CD8-positive, alpha-beta T cell (primary cell): ENCODE measurements at regions of chr10 and their contacts with region 1.

Region 1: GRCh38 chr10:21724695-21725367 is 190.8 kb downstream of the MLLT10 start:
- DNase-seq: peak in 8 of 9 experiments; percentile 22 to 71 (median 53)
- ATAC-seq: peak; percentile 36
- H3K4me3 ChIP-seq: no peak overlapping the region
- H3K4me3 Mint-ChIP-seq: no peak overlapping the region
- H3K27ac ChIP-seq: no peak overlapping the region
- H3K27ac Mint-ChIP-seq: peak overlapping the region; percentile 5
- H3K4me1 ChIP-seq: peaks cover 6% of the 10 kb centered on the region
- H3K4me1 Mint-ChIP-seq: peaks cover 27% of the 10 kb centered on the region
- H3K27me3 ChIP-seq: no peaks in the 10 kb centered on the region
- H3K27me3 Mint-ChIP-seq: no peaks in the 10 kb centered on the region
- CTCF ChIP-seq: no peak

Region 2: GRCh38 chr10:21352886-21353285 is 371.9 kb before region 1 on chr10:
- CTCF ChIA-PET with region 1: no interaction called
- POLR2A ChIA-PET with region 1: no interaction called
- intact Hi-C with region 1: no loop called
- DNase-seq: no peak
- ATAC-seq: no peak
- H3K4me3 ChIP-seq: no peak overlapping the region
- H3K4me3 Mint-ChIP-seq: no peak overlapping the region
- H3K27ac ChIP-seq: no peak overlapping the region
- H3K27ac Mint-ChIP-seq: no peak overlapping the region
- H3K4me1 ChIP-seq: no peaks in the 10 kb centered on the region
- H3K4me1 Mint-ChIP-seq: no peaks in the 10 kb centered on the region
- H3K27me3 ChIP-seq: peaks cover 0 to 3% of the 10 kb centered on the region in 2 experiments
- H3K27me3 Mint-ChIP-seq: peaks cover 3% of the 10 kb centered on the region
- CTCF ChIP-seq: no peak

Region 3: DNA sequence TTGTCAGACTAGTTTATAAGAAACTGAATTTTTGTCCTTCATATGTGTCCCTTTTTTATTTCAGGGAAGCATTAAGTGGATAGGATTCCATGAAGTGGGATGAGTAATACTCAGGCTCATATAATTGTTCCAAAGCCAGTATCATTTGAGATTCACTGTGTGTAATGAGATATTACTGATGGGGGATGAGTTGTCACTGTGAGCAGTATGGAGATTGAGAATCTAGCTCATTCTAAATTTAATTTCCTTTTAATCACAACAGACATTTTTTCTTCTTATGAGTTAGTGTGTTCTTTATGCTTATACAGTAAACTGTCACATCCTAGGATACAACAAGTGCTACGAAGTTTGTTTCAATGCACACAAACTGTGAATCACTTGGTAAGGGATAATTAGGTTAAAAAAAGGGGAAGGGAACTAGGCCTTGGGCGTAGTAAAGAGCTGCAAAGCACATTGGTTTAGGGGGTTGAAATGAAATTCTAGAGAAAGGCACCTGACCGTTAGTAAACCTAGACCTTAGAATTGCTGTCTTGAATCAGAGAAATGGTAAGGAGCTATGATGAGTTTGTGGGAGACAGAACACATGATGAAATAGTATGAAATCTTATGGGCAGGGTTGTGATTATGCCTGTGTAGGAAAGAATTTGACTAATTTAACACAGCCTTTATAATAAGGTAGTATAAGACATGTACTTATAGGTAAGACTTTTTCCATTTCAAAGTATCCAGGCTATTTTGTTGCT is 37.4 kb before region 1 on chr10:
- CTCF ChIA-PET with region 1: no interaction called
- POLR2A ChIA-PET with region 1: no interaction called
- intact Hi-C with region 1: loop called in 1 of 2 experiments (anchors 5 kb)
- DNase-seq: no peak
- ATAC-seq: no peak
- H3K4me3 ChIP-seq: no peak overlapping the region
- H3K4me3 Mint-ChIP-seq: no peak overlapping the region
- H3K27ac ChIP-seq: no peak overlapping the region
- H3K27ac Mint-ChIP-seq: no peak overlapping the region
- H3K4me1 ChIP-seq: no peaks in the 10 kb centered on the region
- H3K4me1 Mint-ChIP-seq: no peaks in the 10 kb centered on the region
- H3K27me3 ChIP-seq: no peaks in the 10 kb centered on the region
- H3K27me3 Mint-ChIP-seq: no peaks in the 10 kb centered on the region
- CTCF ChIP-seq: no peak

Region 4: DNA sequence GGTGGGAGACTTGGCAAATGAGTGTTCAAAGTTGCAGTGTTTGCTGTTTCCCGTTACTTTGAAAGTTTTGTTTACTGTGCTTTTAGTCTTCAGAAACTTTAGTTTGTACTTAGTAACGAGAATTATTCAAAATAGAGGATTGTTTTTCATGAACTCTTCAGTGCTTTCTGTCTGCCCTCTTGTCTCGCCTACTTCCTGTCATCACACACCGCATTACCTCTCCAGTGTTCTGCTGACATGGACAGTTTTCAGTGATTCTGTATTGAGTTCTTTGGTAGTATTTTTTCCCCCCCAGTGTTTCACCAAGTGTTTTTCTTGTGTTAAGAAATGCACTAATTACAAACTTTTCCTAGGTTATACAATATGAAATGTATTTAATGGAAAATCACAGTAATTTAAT is 16.2 kb after region 1 on chr10:
- CTCF ChIA-PET with region 1: interaction called, 4 read pairs
- POLR2A ChIA-PET with region 1: interaction called, 5 read pairs
- intact Hi-C with region 1: loop called in 1 of 2 experiments (anchors 2 kb)
- DNase-seq: peak in 5 of 9 experiments; percentile 20 to 70 (median 58)
- ATAC-seq: peak; percentile 94
- H3K4me3 ChIP-seq: no peak overlapping the region
- H3K4me3 Mint-ChIP-seq: no peak overlapping the region
- H3K27ac ChIP-seq: peak overlapping the region; percentile 22 to 29
- H3K27ac Mint-ChIP-seq: peak overlapping the region; percentile 97
- H3K4me1 ChIP-seq: peaks cover 25% of the 10 kb centered on the region
- H3K4me1 Mint-ChIP-seq: peaks cover 51% of the 10 kb centered on the region
- H3K27me3 ChIP-seq: no peaks in the 10 kb centered on the region
- H3K27me3 Mint-ChIP-seq: no peaks in the 10 kb centered on the region
- CTCF ChIP-seq: no peak

Region 5: GRCh38 chr10:21978191-21978862 is 253.5 kb after region 1 on chr10:
- CTCF ChIA-PET with region 1: no interaction called
- POLR2A ChIA-PET with region 1: no interaction called
- intact Hi-C with region 1: no loop called
- DNase-seq: no peak
- ATAC-seq: no peak
- H3K4me3 ChIP-seq: no peak overlapping the region
- H3K4me3 Mint-ChIP-seq: no peak overlapping the region
- H3K27ac ChIP-seq: no peak overlapping the region
- H3K27ac Mint-ChIP-seq: no peak overlapping the region
- H3K4me1 ChIP-seq: no peaks in the 10 kb centered on the region
- H3K4me1 Mint-ChIP-seq: peaks cover 17% of the 10 kb centered on the region
- H3K27me3 ChIP-seq: no peaks in the 10 kb centered on the region
- H3K27me3 Mint-ChIP-seq: peaks cover 2% of the 10 kb centered on the region
- CTCF ChIP-seq: no peak

Region 6: DNA sequence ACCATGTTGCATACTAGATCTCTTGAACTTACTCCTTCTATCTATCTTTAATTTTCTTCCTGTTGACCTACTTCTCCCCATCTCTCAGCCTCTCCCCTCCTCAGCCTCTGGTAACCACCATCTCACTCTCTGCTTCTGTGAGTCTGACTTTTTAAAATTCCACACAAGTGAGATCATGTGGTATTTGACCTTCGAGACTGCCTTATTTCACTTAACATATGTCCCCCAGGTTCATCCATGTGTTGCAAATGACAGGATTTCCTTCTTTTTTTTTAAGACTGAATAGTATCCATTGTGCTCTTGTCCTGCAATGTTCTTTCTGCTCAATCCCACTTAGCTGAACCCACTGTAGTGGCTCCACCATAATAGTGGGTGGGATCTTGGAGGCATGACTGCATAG is 330.1 kb after region 1 on chr10:
- CTCF ChIA-PET with region 1: no interaction called
- POLR2A ChIA-PET with region 1: no interaction called
- intact Hi-C with region 1: no loop called
- DNase-seq: no peak
- ATAC-seq: no peak
- H3K4me3 ChIP-seq: no peak overlapping the region
- H3K4me3 Mint-ChIP-seq: no peak overlapping the region
- H3K27ac ChIP-seq: no peak overlapping the region
- H3K27ac Mint-ChIP-seq: no peak overlapping the region
- H3K4me1 ChIP-seq: no peaks in the 10 kb centered on the region
- H3K4me1 Mint-ChIP-seq: peaks cover 7% of the 10 kb centered on the region
- H3K27me3 ChIP-seq: no peaks in the 10 kb centered on the region
- H3K27me3 Mint-ChIP-seq: peaks cover 6% of the 10 kb centered on the region
- CTCF ChIP-seq: no peak

Region 7: GRCh38 chr10:22379059-22379458 is 654.2 kb after region 1 on chr10:
- CTCF ChIA-PET with region 1: no interaction called
- POLR2A ChIA-PET with region 1: no interaction called
- intact Hi-C with region 1: no loop called
- DNase-seq: no peak
- ATAC-seq: no peak
- H3K4me3 ChIP-seq: no peak overlapping the region
- H3K4me3 Mint-ChIP-seq: no peak overlapping the region
- H3K27ac ChIP-seq: no peak overlapping the region
- H3K27ac Mint-ChIP-seq: no peak overlapping the region
- H3K4me1 ChIP-seq: no peaks in the 10 kb centered on the region
- H3K4me1 Mint-ChIP-seq: no peaks in the 10 kb centered on the region
- H3K27me3 ChIP-seq: no peaks in the 10 kb centered on the region
- H3K27me3 Mint-ChIP-seq: peaks cover 3% of the 10 kb centered on the region
- CTCF ChIP-seq: no peak